ENCODE measurements at regions of chr14 and their contacts with region 1.

Region 1: GRCh38 chr14:52272375-52272774 is 4.9 kb downstream of the PTGDR start:
- DNase-seq: peak; percentile 40
- ATAC-seq: peak; percentile 68
- H3K4me3 ChIP-seq: no peak overlapping the region
- H3K27ac ChIP-seq: no peak overlapping the region
- H3K4me1 ChIP-seq: peaks cover 4% of the 10 kb centered on the region; the same call in 1 of the 2 replicates
- H3K27me3 ChIP-seq: peaks cover 29% of the 10 kb centered on the region
- CTCF ChIP-seq: peak; percentile 50
- POLR2A ChIP-seq: no peak
- RAD21 ChIP-seq: peak; percentile 56

Region 2: DNA sequence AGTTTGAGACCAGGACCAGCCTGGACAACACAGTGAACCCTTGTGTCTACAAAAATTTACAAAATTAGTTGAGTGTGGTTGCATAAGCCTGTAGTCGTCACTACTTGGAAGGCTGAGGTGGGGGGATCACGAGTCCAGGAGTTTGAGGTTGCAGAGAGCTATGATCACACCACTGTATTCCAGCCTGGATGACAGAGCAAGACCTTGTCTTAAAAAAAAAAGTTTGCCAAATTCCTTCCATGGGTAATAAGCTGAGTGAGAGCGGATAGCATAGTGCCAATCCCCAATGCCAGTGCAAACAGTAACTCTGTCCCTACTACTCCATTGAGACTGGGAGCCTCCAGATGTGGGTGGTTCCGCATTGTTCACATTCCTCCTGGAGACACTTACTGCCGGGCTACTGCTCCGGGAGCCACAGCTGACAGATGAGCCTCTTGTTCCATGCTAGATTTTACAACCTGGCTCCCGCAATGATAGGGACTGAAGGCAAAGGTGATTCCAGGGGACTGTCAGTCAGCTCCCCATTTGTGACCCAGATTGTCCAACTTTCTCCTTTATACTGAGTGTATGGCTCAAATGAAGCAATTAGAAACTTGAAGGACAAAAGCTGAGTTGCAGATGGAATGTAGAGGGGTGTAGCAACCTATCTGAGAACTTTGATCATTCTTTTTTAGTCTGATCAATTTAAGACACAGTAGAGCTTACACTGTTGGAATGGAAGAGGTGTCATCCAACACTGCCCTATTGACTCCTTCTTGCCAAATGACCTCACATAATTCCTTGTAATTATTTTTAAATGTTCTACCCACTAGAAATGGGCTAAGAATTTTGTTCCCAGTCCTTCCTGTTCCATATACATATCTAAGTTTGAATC is 634.1 kb before region 1 on chr14:
- CTCF ChIA-PET with region 1: no interaction called
- POLR2A ChIA-PET with region 1: no interaction called
- dilution Hi-C with region 1: no loop called
- in situ Hi-C with region 1: no loop called
- intact Hi-C with region 1: no loop called
- DNase-seq: no peak
- ATAC-seq: peak; percentile 80
- H3K4me3 ChIP-seq: no peak overlapping the region
- H3K27ac ChIP-seq: no peak overlapping the region
- H3K4me1 ChIP-seq: peaks cover 10% of the 10 kb centered on the region
- H3K27me3 ChIP-seq: no peaks in the 10 kb centered on the region
- CTCF ChIP-seq: no peak
- POLR2A ChIP-seq: no peak
- RAD21 ChIP-seq: no peak

Region 3: DNA sequence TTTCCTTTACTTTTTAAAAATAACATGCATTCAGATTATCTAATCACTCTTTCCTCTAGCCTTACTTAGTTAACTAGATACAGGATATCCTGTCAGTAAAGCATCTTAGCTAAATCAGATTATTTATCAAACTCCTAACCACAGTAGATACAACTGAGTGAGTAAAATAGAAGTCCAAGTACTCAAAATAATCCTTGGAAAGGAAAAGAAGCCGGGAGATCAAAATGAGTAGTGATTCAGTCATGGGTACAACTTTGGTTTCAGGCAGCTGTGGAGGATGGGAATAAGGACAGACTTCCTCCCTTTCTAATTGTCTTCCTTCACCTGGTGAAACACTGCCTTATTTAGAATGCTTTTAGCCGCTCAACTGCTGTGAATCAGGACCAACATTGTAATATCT is 382.5 kb before region 1 on chr14:
- CTCF ChIA-PET with region 1: no interaction called
- POLR2A ChIA-PET with region 1: no interaction called
- dilution Hi-C with region 1: no loop called
- in situ Hi-C with region 1: no loop called
- intact Hi-C with region 1: no loop called
- DNase-seq: peak; percentile 39
- ATAC-seq: no peak
- H3K4me3 ChIP-seq: no peak overlapping the region
- H3K27ac ChIP-seq: no peak overlapping the region
- H3K4me1 ChIP-seq: peaks cover 3% of the 10 kb centered on the region
- H3K27me3 ChIP-seq: no peaks in the 10 kb centered on the region
- CTCF ChIP-seq: no peak
- POLR2A ChIP-seq: no peak
- RAD21 ChIP-seq: no peak

Region 4: DNA sequence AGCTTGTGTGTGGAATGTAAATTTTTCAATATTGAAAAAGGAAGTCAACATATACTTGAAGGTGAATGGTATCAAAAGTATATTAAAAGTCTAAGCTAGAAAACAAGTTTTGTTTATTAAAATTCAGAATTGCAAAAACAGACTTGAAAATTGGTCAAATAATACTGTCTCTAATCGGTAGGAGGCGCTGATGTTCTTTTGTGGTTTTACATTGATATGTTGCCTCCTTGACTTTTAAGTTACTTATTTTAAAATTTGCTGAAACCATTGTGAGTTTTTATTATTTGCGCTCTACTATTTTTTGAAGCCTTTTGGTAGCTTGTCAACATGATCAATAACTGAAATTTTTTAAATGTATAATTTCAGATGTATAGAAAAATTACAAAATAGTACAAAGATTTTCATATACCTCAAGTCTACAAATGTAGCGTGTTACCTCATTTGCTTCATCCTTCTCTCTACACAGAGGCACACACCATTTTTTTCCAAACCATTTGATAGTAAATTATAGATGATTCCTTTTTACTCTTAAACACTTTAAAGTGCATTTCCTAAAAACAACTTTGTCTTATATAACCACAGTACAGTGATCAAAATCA is 276.1 kb before region 1 on chr14:
- CTCF ChIA-PET with region 1: no interaction called
- POLR2A ChIA-PET with region 1: no interaction called
- dilution Hi-C with region 1: no loop called
- in situ Hi-C with region 1: no loop called
- intact Hi-C with region 1: loop called (anchors 2 kb)
- DNase-seq: peak; percentile 68
- ATAC-seq: peak; percentile 33; the same call in 1 of the 2 replicates
- H3K4me3 ChIP-seq: no peak overlapping the region
- H3K27ac ChIP-seq: no peak overlapping the region
- H3K4me1 ChIP-seq: peaks cover 2% of the 10 kb centered on the region; the same call in 1 of the 2 replicates
- H3K27me3 ChIP-seq: no peaks in the 10 kb centered on the region
- CTCF ChIP-seq: peak; percentile 78
- POLR2A ChIP-seq: no peak
- RAD21 ChIP-seq: peak; percentile 85

Region 5: DNA sequence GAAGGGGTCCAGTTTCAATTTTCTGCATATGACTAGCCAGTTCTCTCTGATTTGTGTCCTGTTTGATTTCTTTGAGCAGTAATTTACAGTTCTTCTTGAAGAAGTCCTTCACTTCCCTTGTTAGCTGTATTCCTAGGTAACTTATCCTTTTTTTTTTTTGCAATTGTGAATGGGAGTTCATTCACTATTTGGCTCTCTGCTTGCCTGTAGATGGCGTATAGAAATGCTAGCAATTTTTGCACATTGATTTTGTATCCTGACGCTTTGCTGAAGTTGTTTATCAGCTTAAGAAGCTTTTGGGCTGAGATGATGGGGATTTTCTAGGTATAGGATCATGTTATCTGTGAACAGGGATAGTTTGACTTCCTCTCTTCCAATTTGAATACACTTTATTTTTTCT is 125.9 kb before region 1 on chr14:
- CTCF ChIA-PET with region 1: no interaction called
- POLR2A ChIA-PET with region 1: no interaction called
- dilution Hi-C with region 1: no loop called
- in situ Hi-C with region 1: no loop called
- intact Hi-C with region 1: loop called (anchors 5 kb)
- DNase-seq: no peak
- ATAC-seq: no peak
- H3K4me3 ChIP-seq: no peak overlapping the region
- H3K27ac ChIP-seq: no peak overlapping the region
- H3K4me1 ChIP-seq: no peaks in the 10 kb centered on the region
- H3K27me3 ChIP-seq: peaks cover 22% of the 10 kb centered on the region
- CTCF ChIP-seq: peak; percentile 29; the same call in 1 of the 2 replicates
- POLR2A ChIP-seq: no peak
- RAD21 ChIP-seq: no peak

Measured in IMR-90 (cell line).